PC-3 (cell line): ENCODE measurements at regions of chr9 and their contacts with region 1.

Region 1: GRCh38 chr9:113349445-113350094 is at the start of gene BSPRY:
- DNase-seq: peak; percentile 60
- ATAC-seq: peak; percentile 71
- H3K4me3 ChIP-seq: peak within 1 kb of the TSS; percentile 77
- H3K27ac ChIP-seq: no peak within 1 kb of the TSS
- H3K4me1 ChIP-seq: peaks cover 31% of the 10 kb centered on the region
- H3K27me3 ChIP-seq: no peaks in the 10 kb centered on the region
- CTCF ChIP-seq: no peak
- total RNA-seq, gene BSPRY: 22.6 and 23.7 TPM in 2 replicates

Region 2: GRCh38 chr9:113375057-113376023 is 25.8 kb after region 1 on chr9:
- CTCF ChIA-PET with region 1: no interaction called
- POLR2A ChIA-PET with region 1: interaction called, 14 read pairs
- intact Hi-C with region 1: no loop called
- DNase-seq: peak; percentile 10
- ATAC-seq: no peak
- H3K4me3 ChIP-seq: peak overlapping the region; percentile 88
- H3K27ac ChIP-seq: no peak overlapping the region
- H3K4me1 ChIP-seq: peaks cover 6% of the 10 kb centered on the region; the same call in 1 of the 2 replicates
- H3K27me3 ChIP-seq: no peaks in the 10 kb centered on the region
- CTCF ChIP-seq: no peak

Region 3: GRCh38 chr9:113387560-113388230 is 38.1 kb after region 1 on chr9:
- CTCF ChIA-PET with region 1: no interaction called
- POLR2A ChIA-PET with region 1: no interaction called
- intact Hi-C with region 1: no loop called
- DNase-seq: no peak
- ATAC-seq: no peak
- H3K4me3 ChIP-seq: no peak overlapping the region
- H3K27ac ChIP-seq: no peak overlapping the region
- H3K4me1 ChIP-seq: no peaks in the 10 kb centered on the region
- H3K27me3 ChIP-seq: no peaks in the 10 kb centered on the region
- CTCF ChIP-seq: no peak